ENCODE measurements at regions of chr10 and their contacts with region 1.

Region 1: DNA sequence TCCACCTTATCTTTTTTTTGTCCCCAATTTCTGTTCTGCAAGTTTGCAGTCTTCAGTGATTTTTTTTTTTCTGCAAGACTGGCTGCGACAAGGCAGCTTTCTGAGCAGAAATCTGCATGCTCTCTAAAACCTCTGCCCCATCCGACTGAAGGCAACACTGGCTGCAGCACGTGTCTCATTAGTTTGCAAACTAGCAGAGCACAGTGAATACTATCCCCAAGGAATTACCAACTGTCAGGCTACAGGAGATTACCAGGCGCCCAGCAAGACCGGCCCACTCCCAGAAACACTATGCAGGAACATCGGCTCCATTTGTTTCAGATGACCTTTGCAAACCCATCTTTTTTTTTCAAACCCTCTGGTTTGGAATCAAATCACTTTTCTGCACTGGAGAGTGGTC is 538.8 kb downstream of the SORCS1 start:
- DNase-seq: no peak
- H3K4me3 ChIP-seq: no peak overlapping the region
- H3K27ac ChIP-seq: no peak overlapping the region
- H3K4me1 ChIP-seq: peaks cover 4% of the 10 kb centered on the region
- H3K27me3 ChIP-seq: no peaks in the 10 kb centered on the region
- CTCF ChIP-seq: no peak

Region 2: GRCh38 chr10:106500559-106501525 is 124.9 kb before region 1 on chr10:
- CTCF ChIA-PET with region 1: no interaction called
- dilution Hi-C with region 1: no loop called
- in situ Hi-C with region 1: no loop called
- intact Hi-C with region 1: no loop called
- DNase-seq: peak; percentile 62
- H3K4me3 ChIP-seq: no peak overlapping the region
- H3K27ac ChIP-seq: peak overlapping the region; percentile 67
- H3K4me1 ChIP-seq: peaks cover 32% of the 10 kb centered on the region
- H3K27me3 ChIP-seq: no peaks in the 10 kb centered on the region
- CTCF ChIP-seq: no peak

Region 3: DNA sequence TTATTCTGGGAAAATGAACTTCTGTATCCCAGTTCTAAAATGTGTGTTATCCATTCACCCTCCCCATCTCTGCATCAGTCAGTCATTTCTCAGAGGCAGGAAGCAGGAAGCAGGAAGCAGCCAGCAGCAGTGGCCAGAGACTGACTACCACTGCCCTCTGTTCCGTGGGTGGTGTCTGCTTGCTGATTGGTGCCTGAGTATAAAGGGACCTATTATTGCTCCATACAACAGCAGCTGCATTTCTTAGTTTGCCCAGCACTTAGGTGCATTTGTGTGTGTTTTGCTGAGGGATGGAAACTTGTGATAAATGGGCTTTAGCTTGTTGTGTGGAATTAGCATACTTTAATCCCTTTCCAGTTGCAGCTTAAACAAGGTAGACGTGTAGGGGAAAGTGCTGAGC is 43.5 kb before region 1 on chr10:
- CTCF ChIA-PET with region 1: no interaction called
- dilution Hi-C with region 1: no loop called
- in situ Hi-C with region 1: no loop called
- intact Hi-C with region 1: no loop called
- DNase-seq: peak; percentile 49
- H3K4me3 ChIP-seq: no peak overlapping the region
- H3K27ac ChIP-seq: no peak overlapping the region
- H3K4me1 ChIP-seq: peaks cover 15% of the 10 kb centered on the region
- H3K27me3 ChIP-seq: no peaks in the 10 kb centered on the region
- CTCF ChIP-seq: no peak

Region 4: GRCh38 chr10:106593876-106594275 is 31.9 kb before region 1 on chr10:
- CTCF ChIA-PET with region 1: no interaction called
- dilution Hi-C with region 1: no loop called
- in situ Hi-C with region 1: no loop called
- intact Hi-C with region 1: no loop called
- DNase-seq: no peak
- H3K4me3 ChIP-seq: no peak overlapping the region
- H3K27ac ChIP-seq: no peak overlapping the region
- H3K4me1 ChIP-seq: no peaks in the 10 kb centered on the region
- H3K27me3 ChIP-seq: no peaks in the 10 kb centered on the region
- CTCF ChIP-seq: no peak

Region 5: GRCh38 chr10:106655636-106656035 is 29.9 kb after region 1 on chr10:
- CTCF ChIA-PET with region 1: no interaction called
- dilution Hi-C with region 1: no loop called
- in situ Hi-C with region 1: no loop called
- intact Hi-C with region 1: no loop called
- DNase-seq: no peak
- H3K4me3 ChIP-seq: no peak overlapping the region
- H3K27ac ChIP-seq: no peak overlapping the region
- H3K4me1 ChIP-seq: no peaks in the 10 kb centered on the region
- H3K27me3 ChIP-seq: peaks cover 4% of the 10 kb centered on the region
- CTCF ChIP-seq: no peak

Region 6: GRCh38 chr10:106682175-106682574 is 56.4 kb after region 1 on chr10:
- CTCF ChIA-PET with region 1: no interaction called
- dilution Hi-C with region 1: no loop called
- in situ Hi-C with region 1: no loop called
- intact Hi-C with region 1: loop called (anchors 1 kb)
- DNase-seq: no peak
- H3K4me3 ChIP-seq: no peak overlapping the region
- H3K27ac ChIP-seq: no peak overlapping the region
- H3K4me1 ChIP-seq: no peaks in the 10 kb centered on the region
- H3K27me3 ChIP-seq: peaks cover 2% of the 10 kb centered on the region
- CTCF ChIP-seq: peak in 1 of 2 donors; percentile 12

Region 7: DNA sequence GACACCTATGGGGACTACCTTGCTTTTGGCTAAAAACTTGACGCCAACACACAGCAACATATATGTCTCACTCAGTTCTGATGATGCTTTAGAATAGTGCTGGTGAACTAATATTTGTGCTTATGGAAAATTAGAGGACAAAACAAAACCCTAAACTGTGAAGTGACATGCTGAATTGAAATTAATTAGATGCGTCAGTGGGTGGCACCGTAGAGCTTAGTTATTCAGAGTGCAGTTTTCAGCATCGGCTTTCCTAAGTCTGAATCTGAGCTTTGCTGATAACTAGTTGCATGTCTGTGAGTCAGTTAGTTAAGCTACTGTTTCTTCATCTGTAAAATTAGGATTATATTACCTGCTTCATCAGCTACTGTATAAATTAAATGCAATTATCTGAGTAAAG is 783.8 kb after region 1 on chr10:
- CTCF ChIA-PET with region 1: no interaction called
- dilution Hi-C with region 1: no loop called
- in situ Hi-C with region 1: no loop called
- intact Hi-C with region 1: loop called (anchors 10 kb)
- DNase-seq: peak; percentile 14
- H3K4me3 ChIP-seq: no peak overlapping the region
- H3K27ac ChIP-seq: no peak overlapping the region
- H3K4me1 ChIP-seq: no peaks in the 10 kb centered on the region
- H3K27me3 ChIP-seq: no peaks in the 10 kb centered on the region
- CTCF ChIP-seq: peak; percentile 35 to 56

Measured in mammary epithelial cell (primary cell).